Motor neuron (in vitro differentiated cells): ENCODE measurements at regions of chr5 and their contacts with region 1.

Region 1: GRCh38 chr5:175444060-175444904 is at the start of gene DRD1:
- ATAC-seq: peak; percentile 74 to 96 (median 94)
- H3K4me3 ChIP-seq: peak within 1 kb of the TSS; percentile 17 to 38 (median 35)
- H3K27ac ChIP-seq: no peak within 1 kb of the TSS
- H3K4me1 ChIP-seq: no peaks in the 10 kb centered on the region
- total RNA-seq, gene DRD1: 0.08 to 18.5 (median 1.3) TPM

Region 2: DNA sequence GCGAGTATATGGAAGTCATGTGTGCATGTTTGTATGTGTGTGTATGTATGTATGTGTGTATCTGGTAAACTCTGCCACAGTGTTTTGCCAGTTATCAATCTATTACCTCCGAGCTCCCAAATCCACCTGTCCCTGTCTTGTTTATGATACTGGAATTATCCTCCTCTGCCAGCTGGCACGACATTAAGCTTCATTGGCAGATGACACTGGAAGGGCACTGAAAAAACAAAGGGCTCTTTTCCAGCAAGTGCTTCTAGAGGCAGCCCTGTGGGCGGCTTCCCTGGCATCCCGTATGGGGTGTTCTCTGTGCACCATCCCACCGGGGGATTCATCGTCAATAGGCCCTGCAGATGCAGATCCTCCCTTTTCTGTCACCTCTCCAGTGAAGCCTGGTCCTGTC is 498.4 kb before region 1 on chr5:
- in situ Hi-C with region 1: loop called (anchors 5 to 25 kb)
- ATAC-seq: no peak
- H3K4me3 ChIP-seq: no peak overlapping the region
- H3K27ac ChIP-seq: no peak overlapping the region
- H3K4me1 ChIP-seq: no peaks in the 10 kb centered on the region

Region 3: DNA sequence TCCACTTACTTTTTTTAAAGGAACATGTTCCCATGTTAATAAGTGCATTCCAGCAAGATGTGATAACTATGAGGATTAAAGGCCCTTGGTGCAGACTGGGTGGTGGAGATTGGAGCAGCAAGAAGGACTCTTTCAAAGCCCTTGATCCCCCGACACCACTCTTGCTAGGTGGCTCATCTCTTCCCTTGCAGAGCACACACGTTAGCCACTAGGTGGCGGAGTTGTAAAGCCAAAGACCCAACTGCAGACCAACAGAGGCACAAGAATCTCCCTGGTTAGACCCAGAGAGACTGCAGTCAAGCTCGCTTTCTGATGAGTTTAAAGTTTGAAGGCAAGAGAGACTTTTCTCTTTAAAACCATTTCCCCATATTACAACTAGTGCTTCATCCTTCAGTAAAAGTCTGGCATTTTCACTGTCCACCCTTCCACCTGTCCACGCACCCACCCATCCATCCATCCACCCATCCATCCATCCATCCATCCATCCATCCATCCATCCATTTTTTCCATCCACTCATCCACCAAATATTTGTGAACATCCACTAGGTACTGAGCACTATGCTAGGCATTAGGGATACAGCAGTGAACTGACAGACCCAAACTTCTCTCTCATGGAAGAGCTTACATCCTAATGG is 493.0 kb before region 1 on chr5:
- in situ Hi-C with region 1: loop called (anchors 5 to 25 kb)
- ATAC-seq: peak; percentile 77 to 100 (median 97)
- H3K4me3 ChIP-seq: no peak overlapping the region
- H3K27ac ChIP-seq: no peak overlapping the region
- H3K4me1 ChIP-seq: no peaks in the 10 kb centered on the region

Region 4: DNA sequence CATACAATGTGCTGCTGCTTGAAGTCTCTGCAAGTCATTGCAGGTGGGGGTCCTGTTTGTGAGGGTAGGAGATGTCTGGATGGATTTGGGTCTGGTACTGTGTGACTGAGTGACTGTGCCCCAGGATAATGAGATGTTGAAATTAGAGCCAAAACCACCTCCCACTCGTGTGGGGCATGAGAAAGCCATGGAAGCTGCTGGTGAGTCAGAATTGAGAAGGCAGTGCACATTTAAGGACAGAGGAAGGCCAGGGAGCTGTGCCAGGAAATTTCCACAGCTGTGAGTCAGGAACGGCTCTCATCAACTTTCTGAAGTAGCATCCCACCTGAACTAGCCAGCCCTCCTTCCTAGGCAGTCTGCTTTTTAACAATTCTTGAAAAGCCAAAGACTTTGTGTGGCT is 230.1 kb before region 1 on chr5:
- in situ Hi-C with region 1: loop called in 1 of 9 experiments (anchors 25 kb)
- ATAC-seq: peak in 2 of 8 experiments; percentile 46 to 57
- H3K4me3 ChIP-seq: no peak overlapping the region
- H3K27ac ChIP-seq: no peak overlapping the region
- H3K4me1 ChIP-seq: peaks cover 0 to 5% of the 10 kb centered on the region in 2 donors